ENCODE measurements at regions of chr15 and their contacts with region 1.

Region 1: DNA sequence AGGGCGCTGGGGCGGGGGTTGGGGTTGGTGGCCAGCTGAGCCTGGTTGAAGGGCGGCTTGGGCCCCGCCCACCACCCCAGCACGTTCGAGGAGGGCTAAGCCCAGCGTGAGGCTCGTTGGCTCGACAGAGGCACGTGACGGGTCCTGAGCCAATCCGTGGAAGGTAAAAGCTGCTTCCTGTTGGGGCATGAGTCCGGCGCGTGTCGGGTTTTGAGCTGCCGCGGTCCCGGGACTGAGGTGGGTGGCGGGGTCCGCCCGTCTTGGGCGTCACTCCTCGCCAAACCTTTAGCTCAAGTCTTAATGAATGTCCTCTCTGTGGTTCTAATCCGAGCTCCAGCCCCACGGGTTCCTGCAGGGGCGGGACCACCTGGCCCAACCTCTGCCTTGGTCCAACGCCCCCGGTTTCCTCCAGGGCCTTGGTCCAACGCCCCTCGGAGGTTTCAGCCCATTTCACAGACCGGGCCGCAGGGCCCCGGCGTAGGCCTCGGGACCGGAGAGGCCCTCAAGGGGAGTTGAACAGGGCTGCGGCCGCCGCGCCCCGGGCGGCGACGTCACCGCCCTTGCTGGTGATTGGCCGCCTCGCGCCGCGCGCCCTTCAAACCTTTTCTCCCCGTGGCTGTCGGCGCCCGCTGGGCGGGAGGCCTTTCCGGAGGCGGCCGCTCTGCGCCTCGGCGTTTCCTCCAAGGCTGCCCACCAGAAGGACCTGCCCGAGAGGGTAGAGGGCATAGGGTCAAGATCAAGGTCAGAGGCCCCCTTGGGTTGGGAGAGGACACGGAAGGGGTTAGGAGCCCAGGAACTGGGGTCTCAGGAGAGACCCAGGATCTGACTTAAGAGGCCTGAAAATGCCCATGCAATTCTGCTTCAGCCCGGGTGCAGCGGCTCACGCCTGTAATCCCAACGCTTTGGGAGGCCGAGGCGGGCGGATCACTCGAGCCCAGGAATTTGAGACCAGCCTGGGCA is at the start of gene RCCD1:
- DNase-seq: peak; percentile 93 to 98 (median 97)
- H3K4me3 ChIP-seq: peak within 1 kb of the TSS; percentile 44 to 87 (median 69)
- H3K27ac ChIP-seq: peak within 1 kb of the TSS; percentile 60 to 97 (median 83)
- H3K4me1 ChIP-seq: peaks cover 12 to 25% of the 10 kb centered on the region in 2 donors
- H3K27me3 ChIP-seq: no peaks in the 10 kb centered on the region
- CTCF ChIP-seq: no peak
- POLR2A ChIP-seq: peak in 1 of 2 donors; percentile 61
- total RNA-seq, gene RCCD1: 8.1 to 38.7 (median 19.1) TPM

Region 2: DNA sequence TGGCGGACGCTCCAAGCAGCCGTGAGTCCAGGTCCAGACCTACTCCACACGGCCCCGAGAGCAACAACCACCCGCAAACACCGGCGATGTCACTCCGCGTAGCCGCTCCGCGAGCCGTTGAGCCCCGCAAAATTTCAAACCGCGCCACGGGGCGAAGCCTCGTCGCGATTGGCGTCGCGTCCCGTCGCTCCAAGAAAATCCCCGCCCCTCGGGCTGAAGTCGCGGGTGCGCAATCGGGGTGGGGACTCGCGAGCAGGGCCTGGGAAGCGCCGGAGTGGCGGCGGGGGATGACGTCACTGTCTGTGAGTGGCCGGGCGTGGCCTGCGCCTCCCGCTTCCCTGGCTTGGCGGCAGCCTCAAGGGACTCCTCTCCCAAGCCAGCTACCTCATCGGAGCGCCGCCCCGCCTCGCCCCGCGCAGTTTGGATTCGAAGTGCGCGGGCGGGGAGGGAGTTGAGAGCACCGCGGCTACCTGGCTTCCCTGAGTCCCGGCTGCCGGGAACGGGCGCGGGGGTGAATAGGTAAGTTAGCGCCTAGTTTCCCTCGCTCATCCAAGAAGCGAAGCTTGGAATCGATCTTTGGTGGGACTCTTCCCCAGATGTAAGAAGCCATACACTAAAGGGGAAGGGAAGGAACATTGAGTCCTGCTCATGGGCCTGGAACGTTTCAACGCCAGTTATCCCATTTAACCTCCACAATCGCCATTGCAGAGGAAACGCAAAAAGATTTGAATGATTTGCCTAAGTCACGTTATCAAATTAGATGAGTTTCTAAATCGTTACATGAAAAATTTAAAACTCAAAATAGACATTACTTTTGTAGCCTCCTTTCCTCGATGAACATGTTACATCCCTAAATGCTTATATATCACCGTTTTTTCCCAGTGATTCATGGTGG is 39.7 kb after region 1 on chr15 and contains the start of gene PRC1:
- intact Hi-C with region 1: loop called in 1 of 2 experiments (anchors 5 kb)
- DNase-seq: peak; percentile 98 to 99 (median 99)
- H3K4me3 ChIP-seq: peak within 1 kb of the TSS; percentile 59 to 87 (median 81)
- H3K27ac ChIP-seq: peak within 1 kb of the TSS in 4 of 5 donors; percentile 46 to 89 (median 86)
- H3K4me1 ChIP-seq: peaks cover 0 to 15% of the 10 kb centered on the region in 2 donors
- H3K27me3 ChIP-seq: no peaks in the 10 kb centered on the region
- CTCF ChIP-seq: no peak
- POLR2A ChIP-seq: peak; percentile 45 to 86
- total RNA-seq, gene PRC1: 5.4 to 63.8 (median 6.7) TPM

Region 3: GRCh38 chr15:91032919-91033803 is 78.2 kb after region 1 on chr15:
- intact Hi-C with region 1: loop called (anchors 5 to 10 kb)
- DNase-seq: peak; percentile 64 to 82 (median 76)
- H3K4me3 ChIP-seq: no peak overlapping the region
- H3K27ac ChIP-seq: no peak overlapping the region
- H3K4me1 ChIP-seq: no peaks in the 10 kb centered on the region
- H3K27me3 ChIP-seq: no peaks in the 10 kb centered on the region
- CTCF ChIP-seq: peak; percentile 56 to 63 (median 60)
- POLR2A ChIP-seq: no peak

Region 4: GRCh38 chr15:91039996-91040395 is 85.0 kb after region 1 on chr15:
- intact Hi-C with region 1: loop called (anchors 5 to 10 kb)
- DNase-seq: no peak
- H3K4me3 ChIP-seq: no peak overlapping the region
- H3K27ac ChIP-seq: no peak overlapping the region
- H3K4me1 ChIP-seq: no peaks in the 10 kb centered on the region
- H3K27me3 ChIP-seq: no peaks in the 10 kb centered on the region
- CTCF ChIP-seq: no peak
- POLR2A ChIP-seq: no peak

Measured in adrenal gland (tissue), 19 donors.